H1 (cell line): ENCODE measurements at regions of chr6 and their contacts with region 1.

Region 1: GRCh38 chr6:145044641-145045246 is 690.6 kb downstream of the EPM2A start:
- DNase-seq: no peak
- H3K4me3 ChIP-seq: no peak overlapping the region
- H3K27ac ChIP-seq: no peak overlapping the region
- H3K4me1 ChIP-seq: no peaks in the 10 kb centered on the region; a peak in 2 of 7 replicates
- H3K27me3 ChIP-seq: no peaks in the 10 kb centered on the region
- CTCF ChIP-seq: no peak
- EP300 ChIP-seq: no peak
- POLR2A ChIP-seq: no peak
- RAD21 ChIP-seq: no peak

Region 2: DNA sequence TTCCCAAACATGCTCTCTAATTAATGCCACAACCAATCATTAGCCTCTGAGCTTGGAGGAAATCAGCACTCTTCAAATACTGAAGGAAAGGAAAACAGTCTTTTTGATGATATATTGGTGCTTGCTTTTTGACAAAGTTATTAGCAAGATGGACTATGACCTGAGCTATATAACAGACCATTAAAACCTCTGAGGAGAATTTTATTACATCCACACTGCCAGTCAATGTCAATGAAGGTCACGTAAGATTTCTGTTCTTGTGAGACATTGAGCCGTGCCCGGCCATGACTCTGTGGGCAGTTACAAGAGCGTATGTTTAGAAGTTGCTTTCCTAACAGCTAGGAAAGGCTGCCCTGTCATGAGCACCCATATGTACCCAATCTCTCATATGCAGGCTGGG is 100.6 kb before region 1 on chr6:
- CTCF ChIA-PET with region 1: no interaction called
- POLR2A ChIA-PET with region 1: no interaction called
- DNase-seq: no peak
- H3K4me3 ChIP-seq: no peak overlapping the region
- H3K27ac ChIP-seq: no peak overlapping the region
- H3K4me1 ChIP-seq: no peaks in the 10 kb centered on the region; a peak in 1 of 7 replicates
- H3K27me3 ChIP-seq: no peaks in the 10 kb centered on the region
- CTCF ChIP-seq: no peak
- EP300 ChIP-seq: no peak
- POLR2A ChIP-seq: no peak
- RAD21 ChIP-seq: no peak

Region 3: DNA sequence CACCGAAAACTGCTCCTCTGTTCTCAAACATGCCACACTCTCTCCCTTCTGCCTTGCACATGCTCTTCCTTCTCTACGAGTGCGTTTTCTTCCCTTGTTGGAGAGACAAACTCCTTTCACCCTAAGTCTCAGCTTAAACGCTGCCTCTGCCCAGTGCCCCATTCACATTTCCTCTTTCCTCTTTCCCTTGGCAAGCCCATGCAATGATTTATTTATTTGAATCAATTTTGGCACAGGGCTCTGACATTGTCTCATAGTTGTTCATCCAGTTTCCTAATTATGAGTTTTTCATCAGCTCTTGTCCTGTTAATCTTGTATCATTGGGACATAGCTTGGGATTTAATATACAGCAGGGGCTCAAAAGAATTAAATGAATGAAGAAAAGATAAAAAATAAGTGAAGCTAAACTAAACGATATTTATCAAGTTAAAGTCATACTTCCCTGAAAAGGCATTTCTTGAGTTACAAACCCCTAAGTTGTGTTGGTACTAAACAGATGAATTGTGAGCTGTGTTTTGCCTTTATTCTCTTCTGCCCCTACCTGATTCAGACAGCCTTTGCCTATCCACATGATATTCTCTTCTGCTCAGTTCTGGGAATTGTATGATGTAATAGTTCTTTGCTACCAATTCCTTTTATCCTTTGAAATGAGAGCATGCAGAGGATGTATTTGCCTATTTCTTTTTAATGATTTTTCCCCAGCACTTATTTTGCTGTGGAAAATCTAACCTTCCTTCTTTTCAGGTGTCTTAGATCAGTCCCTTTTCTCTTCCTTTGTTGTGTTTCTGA is 55.2 kb before region 1 on chr6:
- CTCF ChIA-PET with region 1: no interaction called
- POLR2A ChIA-PET with region 1: no interaction called
- DNase-seq: no peak
- H3K4me3 ChIP-seq: no peak overlapping the region
- H3K27ac ChIP-seq: no peak overlapping the region
- H3K4me1 ChIP-seq: 0 out of 7 replicates have a peak, but pooled peaks cover 0 to 2% (median 1%) of the 10 kb centered on the region in 4 experiments
- H3K27me3 ChIP-seq: no peaks in the 10 kb centered on the region
- CTCF ChIP-seq: no peak
- EP300 ChIP-seq: no peak
- POLR2A ChIP-seq: no peak
- RAD21 ChIP-seq: no peak

Region 4: DNA sequence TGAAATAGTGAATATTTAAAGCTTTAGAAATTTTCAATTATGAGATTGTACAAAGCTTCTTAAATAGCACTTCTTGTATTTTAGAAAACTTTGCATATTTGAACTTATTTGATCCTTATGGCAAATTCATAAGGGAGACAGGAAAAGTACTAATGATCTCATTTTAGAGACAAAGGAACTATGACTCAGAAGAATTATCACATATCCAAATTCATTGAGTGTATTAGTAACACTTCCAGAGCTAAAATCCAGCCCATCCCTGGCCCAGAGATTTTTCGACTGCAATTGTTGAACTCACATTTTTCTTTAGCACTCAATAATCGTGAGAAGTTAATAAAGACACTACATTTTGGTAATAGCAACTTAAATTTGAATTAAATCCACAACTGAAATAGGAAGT is 13.7 kb before region 1 on chr6:
- CTCF ChIA-PET with region 1: interaction called, 13 read pairs
- POLR2A ChIA-PET with region 1: no interaction called
- DNase-seq: no peak
- H3K4me3 ChIP-seq: no peak overlapping the region
- H3K27ac ChIP-seq: no peak overlapping the region
- H3K4me1 ChIP-seq: no peaks in the 10 kb centered on the region
- H3K27me3 ChIP-seq: no peaks in the 10 kb centered on the region
- CTCF ChIP-seq: no peak
- EP300 ChIP-seq: no peak
- POLR2A ChIP-seq: no peak
- RAD21 ChIP-seq: no peak